ENCODE measurements at regions of chr6 and their contacts with region 1.

Region 1: GRCh38 chr6:20092071-20092566 is 120.2 kb downstream of the MBOAT1 start:
- DNase-seq: peak; percentile 57
- ATAC-seq: peak; percentile 61
- H3K4me3 ChIP-seq: no peak overlapping the region
- H3K27ac ChIP-seq: no peak overlapping the region
- H3K4me1 ChIP-seq: no peaks in the 10 kb centered on the region
- H3K27me3 ChIP-seq: no peaks in the 10 kb centered on the region
- CTCF ChIP-seq: peak; percentile 45 to 72 (median 64); a peak in 4 of 6 replicates
- POLR2A ChIP-seq: no peak
- RAD21 ChIP-seq: peak; percentile 87

Region 2: DNA sequence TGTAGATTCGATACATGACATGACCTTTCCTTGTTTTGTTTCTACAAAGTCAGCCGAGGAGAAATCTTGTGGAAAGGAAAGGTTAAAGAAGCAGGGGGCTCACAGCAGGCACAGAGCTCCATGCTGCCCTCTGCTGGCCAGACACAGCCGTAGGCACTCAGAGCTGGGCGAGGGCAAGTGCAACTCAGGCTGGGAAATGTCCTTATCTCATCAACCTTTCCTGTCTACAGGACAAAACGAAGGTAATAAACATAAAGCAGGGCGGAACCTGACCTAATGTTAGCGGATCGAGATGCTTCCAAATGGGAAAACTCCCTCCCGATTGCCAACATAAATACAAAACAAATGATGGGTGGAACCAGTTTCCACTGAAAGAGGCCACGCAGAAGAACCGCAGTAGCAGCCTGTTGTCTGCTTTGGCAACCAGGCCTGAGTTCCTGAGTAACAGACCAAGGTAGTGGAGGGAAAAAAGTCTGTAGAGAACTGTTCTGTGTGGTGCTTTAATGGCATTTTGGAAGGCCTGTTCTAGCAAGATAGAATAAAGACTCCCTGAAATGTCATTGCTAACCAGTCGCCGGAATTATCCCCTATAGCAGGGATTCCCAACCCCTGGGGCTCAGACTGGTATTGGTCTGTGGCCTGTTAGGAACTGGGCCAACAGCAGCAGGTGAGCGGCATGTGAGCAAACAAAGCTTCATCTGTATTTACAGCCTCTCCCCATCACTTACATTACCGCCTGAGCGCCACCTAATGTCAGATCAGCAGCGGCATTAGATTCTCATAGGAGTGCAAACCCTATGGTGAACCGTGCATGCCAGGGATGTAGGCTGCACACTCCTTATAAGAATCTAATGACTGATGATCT is 34.9 kb after region 1 on chr6:
- CTCF ChIA-PET with region 1: interaction called, 17 read pairs
- POLR2A ChIA-PET with region 1: no interaction called
- RAD21 ChIA-PET with region 1: no interaction called
- intact Hi-C with region 1: loop called (anchors 2 kb)
- DNase-seq: peak; percentile 35
- ATAC-seq: peak; percentile 93
- H3K4me3 ChIP-seq: no peak overlapping the region
- H3K27ac ChIP-seq: no peak overlapping the region; the same call in 1 of the 2 replicates
- H3K4me1 ChIP-seq: peaks cover 15 to 38% of the 10 kb centered on the region in 2 experiments; a peak in 3 of 4 replicates
- H3K27me3 ChIP-seq: no peaks in the 10 kb centered on the region
- CTCF ChIP-seq: peak; percentile 66 to 99 (median 97); a peak in 5 of 6 replicates
- POLR2A ChIP-seq: no peak
- RAD21 ChIP-seq: peak; percentile 61

Region 3: DNA sequence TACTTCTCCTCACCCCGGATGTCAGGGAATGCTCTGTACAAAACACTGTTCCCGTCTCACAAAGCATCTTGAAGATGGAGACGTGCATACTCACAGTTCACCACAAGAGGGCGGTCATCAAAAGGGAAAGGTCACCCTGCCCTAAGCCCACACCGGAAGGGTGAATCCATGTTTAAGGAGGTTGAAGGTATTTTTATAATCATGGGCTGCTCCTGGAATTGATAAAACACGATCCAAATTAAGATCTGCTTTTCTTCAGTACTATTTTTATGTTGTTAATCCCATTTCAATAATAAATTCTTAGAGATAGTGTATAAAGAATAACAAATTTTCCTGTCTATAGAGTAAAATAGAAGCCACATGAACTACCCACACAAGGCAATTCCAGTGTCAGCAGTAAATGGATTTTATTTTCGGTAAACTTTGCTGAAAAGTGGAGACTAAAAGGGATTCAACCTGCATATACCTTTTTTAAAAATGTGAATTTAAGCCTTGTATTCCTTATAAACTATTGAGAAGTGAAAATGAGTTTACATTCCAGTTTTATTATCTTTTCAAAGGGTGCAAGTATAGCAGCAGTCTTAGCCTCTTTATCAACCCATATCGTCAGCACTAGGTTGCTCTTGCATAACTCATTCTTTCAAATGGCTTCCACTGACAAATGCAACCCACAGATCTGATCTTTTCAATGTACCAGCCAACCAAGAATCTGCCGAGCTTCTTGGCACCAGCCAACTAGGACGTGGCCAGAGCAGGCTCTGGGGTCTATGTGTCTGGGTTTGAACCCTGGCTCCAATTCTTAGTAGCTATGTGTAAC is 199.9 kb after region 1 on chr6:
- CTCF ChIA-PET with region 1: interaction called, 3 read pairs
- POLR2A ChIA-PET with region 1: no interaction called
- RAD21 ChIA-PET with region 1: no interaction called
- intact Hi-C with region 1: loop called (anchors 2 kb)
- DNase-seq: peak; percentile 84
- ATAC-seq: peak; percentile 98
- H3K4me3 ChIP-seq: no peak overlapping the region
- H3K27ac ChIP-seq: no peak overlapping the region
- H3K4me1 ChIP-seq: peaks cover 3 to 14% of the 10 kb centered on the region in 2 experiments; a peak in 3 of 4 replicates
- H3K27me3 ChIP-seq: no peaks in the 10 kb centered on the region
- CTCF ChIP-seq: peak; percentile 77 to 85 (median 85)
- POLR2A ChIP-seq: no peak
- RAD21 ChIP-seq: peak; percentile 90

Region 4: DNA sequence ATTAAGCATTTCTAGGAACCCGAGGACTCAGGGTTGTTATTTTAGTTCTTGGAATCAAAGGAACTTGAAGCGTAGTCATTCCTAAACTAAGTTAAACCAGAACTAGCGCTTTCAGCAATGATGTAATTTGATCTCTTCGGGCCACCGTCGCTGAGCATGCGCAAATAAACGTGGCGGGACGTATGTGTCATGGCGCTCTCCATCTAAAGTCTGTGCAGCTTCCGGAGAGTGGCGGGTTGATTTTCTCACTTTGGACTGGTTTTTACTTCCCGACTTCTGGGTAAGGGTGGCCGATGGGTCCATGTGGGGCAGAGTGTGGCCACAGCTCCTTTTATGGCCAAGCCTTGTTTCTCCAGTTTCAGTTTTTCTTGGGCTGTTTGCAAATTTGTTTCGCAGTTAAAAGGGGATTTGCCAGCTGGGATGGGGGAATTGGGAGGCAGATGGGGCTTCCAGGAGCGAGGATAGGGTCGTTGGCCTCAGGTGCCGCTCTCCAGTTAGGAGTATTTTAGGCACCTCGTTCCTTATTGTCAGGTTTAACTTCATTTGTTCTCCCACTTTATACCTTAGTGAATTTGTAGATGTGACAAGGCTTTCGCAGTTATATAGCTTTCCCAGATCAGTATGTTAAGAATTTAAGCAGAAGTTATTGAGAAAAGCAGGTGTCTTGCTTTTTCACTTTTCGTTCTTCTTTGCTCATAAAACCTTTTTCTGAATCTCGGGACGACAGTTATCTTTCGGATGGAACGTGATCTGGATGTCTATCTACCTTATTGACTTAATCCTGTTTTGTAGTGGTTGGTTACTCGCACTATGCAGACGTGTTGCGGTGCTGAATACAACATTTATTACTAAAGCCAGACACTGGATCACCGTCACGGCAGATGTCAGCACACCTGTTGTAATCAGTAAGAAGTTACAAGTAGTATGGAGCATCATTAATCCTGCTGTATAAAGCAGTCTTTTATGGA is 442.5 kb after region 1 on chr6 and contains the start of gene CDKAL1:
- CTCF ChIA-PET with region 1: no interaction called
- POLR2A ChIA-PET with region 1: no interaction called
- RAD21 ChIA-PET with region 1: no interaction called
- intact Hi-C with region 1: loop called (anchors 1 kb)
- DNase-seq: peak; percentile 89
- ATAC-seq: peak; percentile 85
- H3K4me3 ChIP-seq: peak within 1 kb of the TSS; percentile 69 to 72
- H3K27ac ChIP-seq: peak within 1 kb of the TSS; percentile 64
- H3K4me1 ChIP-seq: peaks cover 4 to 18% of the 10 kb centered on the region in 2 experiments; a peak in 3 of 4 replicates
- H3K27me3 ChIP-seq: no peaks in the 10 kb centered on the region
- CTCF ChIP-seq: no peak
- POLR2A ChIP-seq: peak; percentile 84
- RAD21 ChIP-seq: peak; percentile 2; the same call in 1 of the 2 replicates
- total RNA-seq, gene CDKAL1: 14.9 TPM

Measured in HCT116 (cell line).